Common myeloid progenitor, CD34-positive (primary cell): ENCODE measurements at regions of chr15 and their contacts with region 1.

Region 1: GRCh38 chr15:75723847-75724660 is 11.4 kb upstream of the CSPG4 start:
- DNase-seq: peak; percentile 82 to 89 (median 89)
- H3K4me3 ChIP-seq: peak overlapping the region in 1 of 7 experiments; percentile 7
- H3K27ac ChIP-seq: no peak overlapping the region
- H3K4me1 ChIP-seq: peaks cover 0 to 18% (median 9%) of the 10 kb centered on the region in 4 experiments
- H3K27me3 ChIP-seq: peaks cover 0 to 9% (median 0%) of the 10 kb centered on the region in 5 experiments

Region 2: GRCh38 chr15:75659928-75660645 is 64.0 kb before region 1 on chr15:
- CTCF ChIA-PET with region 1: no interaction called
- POLR2A ChIA-PET with region 1: no interaction called
- DNase-seq: no peak
- H3K4me3 ChIP-seq: no peak overlapping the region
- H3K27ac ChIP-seq: no peak overlapping the region
- H3K4me1 ChIP-seq: no peaks in the 10 kb centered on the region
- H3K27me3 ChIP-seq: no peaks in the 10 kb centered on the region

Region 3: GRCh38 chr15:75738647-75739331 is 14.7 kb after region 1 on chr15:
- CTCF ChIA-PET with region 1: interaction called, 13 read pairs
- POLR2A ChIA-PET with region 1: no interaction called
- DNase-seq: peak; percentile 91 to 97 (median 95)
- H3K4me3 ChIP-seq: peak overlapping the region; percentile 61 to 87 (median 69)
- H3K27ac ChIP-seq: no peak overlapping the region
- H3K4me1 ChIP-seq: peaks cover 0 to 16% (median 9%) of the 10 kb centered on the region in 4 experiments
- H3K27me3 ChIP-seq: peaks cover 0 to 6% (median 0%) of the 10 kb centered on the region in 5 experiments

Region 4: DNA sequence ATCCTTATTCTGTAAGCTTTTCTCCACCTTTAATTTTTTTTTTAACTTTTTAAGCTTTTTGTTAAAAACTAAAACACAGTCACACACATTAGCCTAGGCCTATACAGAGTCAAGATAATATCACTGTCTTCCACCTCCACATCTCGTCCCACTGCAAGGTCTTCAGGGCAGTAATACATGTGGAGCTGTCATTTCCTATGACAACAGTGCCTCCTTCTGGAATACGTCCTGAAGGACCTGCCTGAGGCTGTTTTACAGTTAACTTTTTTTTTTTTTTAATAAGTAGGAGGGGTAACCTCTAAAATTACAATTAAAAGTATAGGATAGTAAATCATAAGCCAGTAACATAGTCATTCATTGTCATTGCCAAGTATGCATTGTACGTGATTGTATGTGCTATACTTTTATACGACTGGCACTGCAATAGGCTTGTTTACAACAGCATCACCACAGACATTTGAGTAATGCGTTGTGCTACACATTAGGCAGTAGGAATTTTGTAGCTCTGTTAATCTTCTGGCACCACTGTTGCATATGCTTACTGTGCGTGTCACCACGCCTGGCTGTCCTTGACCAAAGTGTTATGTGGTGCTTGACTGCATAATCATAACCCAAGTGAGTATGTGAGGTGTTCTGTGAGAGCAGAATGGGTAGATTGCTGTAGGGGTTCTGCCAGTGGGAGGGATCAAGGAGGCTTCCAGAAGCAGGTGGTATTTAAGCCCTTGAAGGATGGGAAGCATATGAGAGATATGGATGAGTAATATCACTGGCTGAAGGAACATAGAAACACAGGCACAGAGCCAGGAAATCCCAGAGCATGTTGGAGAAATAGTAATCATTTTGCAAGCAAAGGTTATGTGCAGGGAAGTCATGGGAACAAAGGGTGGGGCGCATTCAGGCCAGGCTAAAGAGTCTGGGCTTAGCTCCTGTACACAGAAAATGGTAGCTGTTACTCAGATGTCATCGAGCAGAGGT is 198.0 kb after region 1 on chr15:
- CTCF ChIA-PET with region 1: interaction called, 12 read pairs
- POLR2A ChIA-PET with region 1: no interaction called
- DNase-seq: peak; percentile 76 to 84 (median 83)
- H3K4me3 ChIP-seq: no peak overlapping the region
- H3K27ac ChIP-seq: no peak overlapping the region
- H3K4me1 ChIP-seq: no peaks in the 10 kb centered on the region
- H3K27me3 ChIP-seq: no peaks in the 10 kb centered on the region

Region 5: GRCh38 chr15:76366714-76367113 is 642.7 kb after region 1 on chr15:
- CTCF ChIA-PET with region 1: no interaction called
- POLR2A ChIA-PET with region 1: no interaction called
- DNase-seq: no peak
- H3K4me3 ChIP-seq: no peak overlapping the region
- H3K27ac ChIP-seq: no peak overlapping the region
- H3K4me1 ChIP-seq: no peaks in the 10 kb centered on the region
- H3K27me3 ChIP-seq: no peaks in the 10 kb centered on the region